Activated CD8-positive, alpha-beta T cell treated with anti-CD3 and anti-CD28 coated beads for 36 hours (primary cell): ENCODE measurements at regions of chr17 and their contacts with region 1.

Region 1: DNA sequence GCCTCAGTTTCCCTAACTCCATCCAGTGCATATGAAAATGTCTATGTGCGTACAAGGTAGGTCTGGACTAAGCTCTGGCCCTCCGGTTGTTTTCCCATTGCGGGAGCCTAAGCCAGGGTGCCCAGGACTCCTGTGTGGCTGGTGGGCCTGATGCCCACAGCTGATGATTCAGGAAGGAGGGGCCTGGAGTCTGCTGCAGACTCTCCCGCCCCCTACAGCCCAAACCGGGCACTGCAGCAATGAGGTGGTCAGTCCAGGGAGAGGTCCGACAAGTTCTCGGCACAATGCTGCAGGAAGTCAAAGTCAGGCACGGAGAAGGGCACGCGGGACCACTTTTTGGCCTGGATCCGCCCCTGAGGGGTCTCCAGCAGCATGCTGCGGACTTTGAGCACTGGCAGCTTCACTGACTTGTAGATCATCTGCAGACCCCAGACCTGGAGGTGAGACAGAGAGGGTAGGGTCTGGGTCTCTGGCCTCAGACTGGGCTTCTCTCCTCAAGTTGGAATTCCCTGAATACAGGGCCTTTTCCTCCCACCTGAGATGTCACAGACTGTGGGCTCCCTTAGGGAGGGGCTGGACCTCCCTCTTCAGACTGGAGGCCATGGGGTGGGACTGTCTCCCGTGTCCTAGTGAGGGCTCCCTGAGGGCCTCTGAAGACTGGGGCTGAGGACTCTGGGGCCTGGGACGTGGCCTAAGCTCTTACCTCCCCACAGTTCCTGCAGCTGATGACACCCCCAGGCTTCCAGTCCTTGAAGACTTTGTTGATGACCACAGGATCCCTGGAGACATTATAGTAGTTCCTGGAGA is 3.4 kb upstream of the ZNF385C start:
- DNase-seq: peak; percentile 90
- ATAC-seq: peak; percentile 89
- H3K4me3 Mint-ChIP-seq: no peak overlapping the region
- H3K27ac Mint-ChIP-seq: no peak overlapping the region
- H3K4me1 Mint-ChIP-seq: peaks cover 9% of the 10 kb centered on the region
- H3K27me3 Mint-ChIP-seq: peaks cover 8% of the 10 kb centered on the region
- CTCF ChIP-seq: peak; percentile 96

Region 2: GRCh38 chr17:41966463-41967140 is 135.1 kb before region 1 on chr17 and contains the start of gene CNP:
- CTCF ChIA-PET with region 1: interaction called, 11 read pairs
- POLR2A ChIA-PET with region 1: no interaction called
- intact Hi-C with region 1: no loop called
- DNase-seq: peak; percentile 92
- ATAC-seq: peak; percentile 82
- H3K4me3 Mint-ChIP-seq: peak within 1 kb of the TSS; percentile 82
- H3K27ac Mint-ChIP-seq: peak within 1 kb of the TSS; percentile 88
- H3K4me1 Mint-ChIP-seq: peaks cover 38% of the 10 kb centered on the region
- H3K27me3 Mint-ChIP-seq: no peaks in the 10 kb centered on the region
- CTCF ChIP-seq: no peak
- total RNA-seq, gene CNP: 50.1 to 54.5 TPM

Region 3: GRCh38 chr17:42027961-42028790 is 73.5 kb before region 1 on chr17:
- CTCF ChIA-PET with region 1: interaction called, 65 read pairs
- POLR2A ChIA-PET with region 1: no interaction called
- intact Hi-C with region 1: no loop called
- DNase-seq: no peak
- ATAC-seq: no peak
- H3K4me3 Mint-ChIP-seq: no peak overlapping the region
- H3K27ac Mint-ChIP-seq: no peak overlapping the region
- H3K4me1 Mint-ChIP-seq: peaks cover 12% of the 10 kb centered on the region
- H3K27me3 Mint-ChIP-seq: peaks cover 5% of the 10 kb centered on the region
- CTCF ChIP-seq: no peak

Region 4: DNA sequence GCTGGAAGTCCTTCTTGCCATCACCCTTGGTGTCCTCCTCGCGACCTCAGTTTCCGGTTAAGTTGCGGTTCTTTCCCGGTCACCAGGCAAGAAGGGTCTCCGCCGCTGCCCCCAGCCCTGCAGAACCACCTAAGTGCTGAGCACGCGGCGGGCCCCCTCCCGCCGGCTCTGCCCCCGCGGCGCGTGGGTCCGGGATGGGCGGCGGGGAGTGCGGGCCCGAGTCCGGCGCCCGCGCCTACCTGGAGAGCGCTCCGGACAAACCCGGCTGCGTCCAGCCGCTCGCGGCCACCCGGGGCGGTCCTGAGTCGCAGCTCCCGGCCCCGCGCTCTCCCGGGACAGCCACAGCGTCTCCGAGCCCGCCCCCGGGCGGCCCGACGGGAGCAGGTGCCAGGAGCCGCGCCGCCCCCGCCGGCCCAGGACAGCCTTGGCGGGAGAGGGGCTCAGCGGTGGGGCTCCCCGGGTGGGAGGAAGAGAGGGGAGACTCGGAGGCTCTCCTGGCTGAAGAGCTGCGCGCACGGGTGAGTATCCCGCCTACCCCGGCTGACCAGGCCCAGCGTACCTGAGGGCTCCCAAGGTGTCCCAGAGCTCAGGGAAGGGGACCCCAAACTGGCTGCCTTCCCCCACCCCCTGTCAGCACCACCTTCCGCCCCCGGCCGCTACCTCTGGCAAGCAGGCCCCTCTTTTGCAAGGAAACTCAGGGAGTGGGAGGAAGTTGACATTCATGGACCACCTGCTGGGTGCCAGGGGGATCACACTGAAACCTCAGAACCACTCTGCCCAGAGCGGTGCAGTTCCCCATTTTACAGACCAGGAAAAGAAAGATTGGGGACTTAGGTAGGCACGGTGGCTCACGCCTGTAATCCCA is 29.2 kb before region 1 on chr17:
- CTCF ChIA-PET with region 1: interaction called, 72 read pairs
- POLR2A ChIA-PET with region 1: interaction called, 4 read pairs
- intact Hi-C with region 1: no loop called
- DNase-seq: peak; percentile 21
- ATAC-seq: peak; percentile 32
- H3K4me3 Mint-ChIP-seq: peak overlapping the region; percentile 72
- H3K27ac Mint-ChIP-seq: peak overlapping the region; percentile 59
- H3K4me1 Mint-ChIP-seq: peaks cover 13% of the 10 kb centered on the region
- H3K27me3 Mint-ChIP-seq: peaks cover 8% of the 10 kb centered on the region
- CTCF ChIP-seq: peak; percentile 47

Region 5: DNA sequence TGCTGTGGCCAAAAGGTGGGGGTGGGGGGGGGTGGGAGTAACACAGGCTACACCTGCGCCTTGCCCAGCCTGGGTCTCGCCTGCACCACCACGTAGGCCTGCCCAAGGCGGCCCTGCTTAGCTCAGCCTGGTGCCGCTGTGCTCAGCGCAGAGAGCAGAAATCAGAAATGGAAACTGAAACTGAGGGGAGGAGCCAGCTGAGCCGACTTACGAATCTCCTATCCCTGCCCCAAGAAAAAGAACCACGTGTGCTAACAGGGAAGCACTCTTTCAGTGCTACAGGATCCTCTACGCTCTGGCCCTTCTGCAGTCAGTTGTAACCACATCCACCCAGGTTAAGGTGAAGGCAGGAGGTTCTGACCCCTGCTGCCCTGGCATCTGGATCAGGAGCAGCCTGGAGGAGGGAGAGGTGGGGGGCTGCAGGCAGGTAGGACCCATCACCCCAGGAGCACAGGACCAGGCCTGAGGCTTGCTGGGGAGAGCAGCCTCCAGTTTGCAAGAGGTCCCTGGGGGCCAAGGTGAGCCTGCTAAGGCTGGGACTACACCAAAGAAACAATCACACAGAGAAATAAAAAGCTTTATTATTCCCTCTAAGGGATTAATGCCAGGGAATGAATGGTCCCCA is 10.9 kb after region 1 on chr17 and contains the start of gene DHX58:
- CTCF ChIA-PET with region 1: interaction called, 5 read pairs
- POLR2A ChIA-PET with region 1: interaction called, 14 read pairs
- intact Hi-C with region 1: no loop called
- DNase-seq: peak; percentile 89
- ATAC-seq: peak; percentile 82
- H3K4me3 Mint-ChIP-seq: peak within 1 kb of the TSS; percentile 79
- H3K27ac Mint-ChIP-seq: peak within 1 kb of the TSS; percentile 92
- H3K4me1 Mint-ChIP-seq: peaks cover 30% of the 10 kb centered on the region
- H3K27me3 Mint-ChIP-seq: no peaks in the 10 kb centered on the region
- CTCF ChIP-seq: no peak
- total RNA-seq, gene DHX58: 31.7 to 36.2 TPM